Activated T-helper 2 cell treated with anti-CD3 and anti-CD28 coated beads, Interferon-gamma antibody, Interleukin-2, Interleukin-4, amounts not matched to agents 10 μg/mL and 5 μg/mL and 100 μg/mL, durations not matched to agents 14 hours and 24 hours and 36 hours (primary cell): ENCODE measurements at regions of chr4 and their contacts with region 1.

Region 1: DNA sequence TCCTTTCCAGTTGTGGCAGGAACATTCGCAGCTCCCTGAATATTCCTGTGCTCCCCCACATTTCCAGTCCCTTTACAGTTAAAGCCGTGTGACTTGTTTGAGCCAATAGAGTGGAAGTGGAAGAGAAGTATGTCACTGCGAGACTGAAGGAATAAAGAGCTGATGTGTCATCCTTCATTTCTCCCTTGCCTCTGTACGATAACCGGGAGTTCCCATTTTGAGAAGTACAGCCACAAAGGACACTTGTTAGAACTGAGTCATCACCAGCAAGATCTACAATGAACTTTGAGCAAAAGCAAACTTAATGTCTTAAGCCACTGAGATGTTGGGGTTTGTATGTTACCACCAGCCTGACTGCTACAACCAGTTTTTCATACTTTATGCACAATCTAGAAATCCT is 92.3 kb downstream of the SPRY1 start:
- DNase-seq: no peak
- H3K4me3 Mint-ChIP-seq: no peak overlapping the region
- H3K27ac Mint-ChIP-seq: peak overlapping the region; percentile 56
- H3K4me1 Mint-ChIP-seq: peaks cover 10% of the 10 kb centered on the region
- H3K27me3 Mint-ChIP-seq: peaks cover 2% of the 10 kb centered on the region

Region 2: GRCh38 chr4:123415977-123416376 is 72.9 kb before region 1 on chr4:
- intact Hi-C with region 1: loop called (anchors 1 kb)
- DNase-seq: peak; percentile 50
- H3K4me3 Mint-ChIP-seq: peak overlapping the region; percentile 14
- H3K27ac Mint-ChIP-seq: peak overlapping the region; percentile 85
- H3K4me1 Mint-ChIP-seq: peaks cover 70% of the 10 kb centered on the region
- H3K27me3 Mint-ChIP-seq: no peaks in the 10 kb centered on the region

Region 3: DNA sequence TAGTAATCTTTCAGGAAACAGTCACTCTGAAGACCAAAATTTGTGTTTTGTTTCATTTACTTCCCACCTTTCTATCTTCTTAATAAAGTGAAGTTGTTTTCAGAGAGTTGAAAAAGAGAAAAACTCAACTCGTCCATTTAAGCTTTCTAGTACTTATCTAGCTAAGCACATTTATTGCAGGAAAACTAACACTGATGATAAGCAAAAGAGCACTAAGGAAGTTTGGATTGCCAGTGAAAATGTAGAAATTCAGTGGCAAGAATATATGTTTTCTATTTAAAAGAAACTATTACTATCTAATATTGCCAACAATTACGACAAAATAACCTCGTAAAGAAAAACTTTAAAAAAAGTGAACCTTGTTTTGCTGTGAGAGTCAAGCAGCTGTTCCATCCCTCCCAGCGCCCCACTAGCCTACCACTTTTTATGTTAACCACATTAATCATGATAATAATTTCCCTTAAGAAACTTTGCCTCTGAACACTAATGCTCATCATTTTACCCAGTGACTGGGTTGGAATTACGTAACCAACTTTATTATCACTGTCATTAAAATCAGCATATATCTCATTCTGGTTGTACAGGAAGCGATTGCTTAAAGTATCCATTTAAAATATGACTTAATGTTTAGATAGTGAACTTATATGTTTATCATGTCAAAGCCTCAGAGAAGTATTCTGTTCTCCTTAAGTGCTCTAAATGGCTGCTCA is 67.5 kb before region 1 on chr4:
- intact Hi-C with region 1: loop called (anchors 1 kb)
- DNase-seq: no peak
- H3K4me3 Mint-ChIP-seq: peak overlapping the region; percentile 5
- H3K27ac Mint-ChIP-seq: peak overlapping the region; percentile 99
- H3K4me1 Mint-ChIP-seq: peaks cover 69% of the 10 kb centered on the region
- H3K27me3 Mint-ChIP-seq: no peaks in the 10 kb centered on the region

Region 4: DNA sequence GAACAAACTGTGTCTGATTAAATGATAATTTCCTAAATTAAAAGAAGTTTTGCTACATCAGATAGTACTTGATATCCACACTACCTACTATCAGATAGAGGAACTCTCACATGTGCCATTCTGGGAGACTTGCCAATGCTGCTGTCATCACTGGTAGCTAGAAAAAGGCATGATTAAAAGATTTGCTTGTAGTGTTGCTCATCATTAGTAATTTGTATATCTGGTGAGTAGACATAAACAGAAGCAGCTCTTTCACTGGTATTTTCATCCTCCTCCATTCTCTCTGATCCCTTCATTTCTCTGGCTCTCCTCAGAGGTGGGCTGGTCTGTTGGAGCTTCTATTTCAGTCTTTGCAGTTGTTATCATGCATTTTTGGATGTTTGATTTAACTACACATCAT is 36.3 kb before region 1 on chr4:
- intact Hi-C with region 1: loop called (anchors 2 kb)
- DNase-seq: no peak
- H3K4me3 Mint-ChIP-seq: no peak overlapping the region
- H3K27ac Mint-ChIP-seq: no peak overlapping the region
- H3K4me1 Mint-ChIP-seq: peaks cover 24% of the 10 kb centered on the region
- H3K27me3 Mint-ChIP-seq: no peaks in the 10 kb centered on the region

Region 5: GRCh38 chr4:123477711-123478209 is 11.2 kb before region 1 on chr4:
- intact Hi-C with region 1: loop called (anchors 1 kb)
- DNase-seq: peak; percentile 57
- H3K4me3 Mint-ChIP-seq: peak overlapping the region; percentile 54
- H3K27ac Mint-ChIP-seq: peak overlapping the region; percentile 78
- H3K4me1 Mint-ChIP-seq: peaks cover 49% of the 10 kb centered on the region
- H3K27me3 Mint-ChIP-seq: no peaks in the 10 kb centered on the region

Region 6: GRCh38 chr4:123505095-123506010 is 16.4 kb after region 1 on chr4:
- intact Hi-C with region 1: loop called (anchors 2 kb)
- DNase-seq: no peak
- H3K4me3 Mint-ChIP-seq: peak overlapping the region; percentile 85
- H3K27ac Mint-ChIP-seq: peak overlapping the region; percentile 72
- H3K4me1 Mint-ChIP-seq: peaks cover 18% of the 10 kb centered on the region
- H3K27me3 Mint-ChIP-seq: peaks cover 38% of the 10 kb centered on the region

Region 7: GRCh38 chr4:123517971-123518370 is 29.1 kb after region 1 on chr4:
- intact Hi-C with region 1: no loop called
- DNase-seq: no peak
- H3K4me3 Mint-ChIP-seq: no peak overlapping the region
- H3K27ac Mint-ChIP-seq: no peak overlapping the region
- H3K4me1 Mint-ChIP-seq: peaks cover 1% of the 10 kb centered on the region
- H3K27me3 Mint-ChIP-seq: peaks cover 29% of the 10 kb centered on the region

Region 8: DNA sequence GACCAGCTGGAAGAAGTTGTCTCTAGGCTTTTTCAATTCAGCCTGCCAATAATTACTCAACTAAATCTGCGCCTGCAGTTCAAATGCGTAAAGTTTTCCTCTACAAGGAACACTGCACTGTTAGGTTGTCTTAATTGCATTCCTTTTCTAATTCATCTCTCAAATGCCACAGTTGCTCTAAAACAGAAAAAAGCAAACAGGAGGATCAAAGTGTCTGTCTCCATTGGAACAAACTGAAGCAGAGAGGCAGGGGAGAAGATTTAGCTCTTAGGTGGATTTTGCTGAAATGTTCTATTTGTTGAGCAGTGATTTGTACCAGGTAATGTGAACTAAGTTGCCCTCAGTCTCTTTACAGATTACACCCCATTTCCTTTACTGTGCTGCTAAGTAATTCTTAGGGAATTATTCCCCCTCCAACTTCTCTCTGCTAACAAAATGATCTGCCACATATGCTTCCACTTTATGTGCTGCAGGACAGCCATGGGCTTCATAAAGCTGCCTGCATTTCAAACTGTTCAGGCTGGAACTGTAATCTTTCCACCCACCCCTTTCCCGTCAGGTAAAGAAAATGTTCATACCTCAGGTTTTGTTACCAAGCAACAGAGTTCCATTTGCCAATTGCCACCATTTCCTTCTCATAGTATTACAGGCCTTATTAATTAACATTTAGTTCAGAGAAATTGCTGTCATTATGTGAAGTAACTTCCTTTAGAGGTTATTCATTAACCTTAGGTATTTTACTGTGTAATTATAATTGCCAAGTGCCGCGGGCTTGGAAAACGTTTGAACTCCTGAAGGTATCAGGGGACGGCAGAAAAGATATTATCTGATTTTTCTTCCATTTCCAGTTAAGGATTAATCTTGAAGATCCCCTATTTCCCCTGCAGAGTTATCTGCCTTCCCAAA is 57.0 kb after region 1 on chr4:
- intact Hi-C with region 1: no loop called
- DNase-seq: no peak
- H3K4me3 Mint-ChIP-seq: no peak overlapping the region
- H3K27ac Mint-ChIP-seq: no peak overlapping the region
- H3K4me1 Mint-ChIP-seq: no peaks in the 10 kb centered on the region
- H3K27me3 Mint-ChIP-seq: peaks cover 9% of the 10 kb centered on the region

Region 9: DNA sequence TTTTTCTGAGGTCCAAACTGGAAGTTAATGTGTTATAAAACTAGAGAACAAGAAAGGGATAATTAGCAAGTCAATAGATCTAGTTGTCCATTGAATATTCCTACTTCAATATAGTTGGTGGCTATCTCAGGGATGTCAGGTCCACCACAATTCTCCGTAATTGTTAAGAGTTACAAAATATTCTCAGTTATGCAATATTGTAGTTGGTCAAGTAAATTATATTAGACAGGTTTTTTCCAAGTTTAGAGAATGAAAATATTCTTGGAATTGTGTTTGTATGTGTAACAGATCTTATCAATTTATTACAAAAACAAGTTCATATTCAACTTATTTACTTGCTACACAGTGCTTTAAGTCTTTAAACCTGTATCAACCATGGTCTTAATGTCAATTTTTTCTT is 455.1 kb after region 1 on chr4:
- intact Hi-C with region 1: no loop called
- DNase-seq: no peak
- H3K4me3 Mint-ChIP-seq: no peak overlapping the region
- H3K27ac Mint-ChIP-seq: no peak overlapping the region
- H3K4me1 Mint-ChIP-seq: no peaks in the 10 kb centered on the region
- H3K27me3 Mint-ChIP-seq: no peaks in the 10 kb centered on the region